ENCODE measurements at regions of chr11 and their contacts with region 1.

Region 1: DNA sequence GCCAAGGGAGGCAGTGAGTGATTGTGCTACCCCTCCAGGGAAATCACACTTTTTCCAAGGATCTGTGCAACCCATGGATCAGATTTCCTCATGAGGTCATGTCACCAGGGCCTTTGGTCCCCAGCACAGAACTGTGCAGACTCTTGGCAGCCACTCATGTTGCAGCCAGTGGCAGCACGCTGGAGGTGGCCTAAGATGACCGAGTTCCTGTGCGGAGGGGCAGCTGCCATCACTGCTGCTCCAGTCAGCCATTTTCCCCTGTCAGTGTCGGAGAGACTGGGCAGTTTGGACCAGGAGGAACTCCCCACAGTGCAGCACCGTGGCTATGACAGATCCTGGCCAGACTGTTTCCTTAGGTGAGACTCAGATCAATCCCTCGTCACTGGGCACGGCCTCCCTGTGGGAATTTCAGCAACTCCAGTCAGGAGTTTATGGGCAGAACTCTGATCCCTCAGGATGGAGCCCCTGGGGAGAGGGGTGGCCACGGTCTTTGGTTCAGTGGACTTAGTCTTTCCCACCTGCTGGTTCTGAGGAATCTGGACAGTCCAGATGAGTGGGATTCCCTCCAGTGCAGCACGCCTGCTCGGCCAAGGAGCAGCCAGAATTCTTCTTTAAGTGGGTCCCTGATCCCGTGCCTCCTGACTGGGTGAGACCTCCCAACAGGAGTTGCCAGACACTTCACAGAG is 194.6 kb upstream of the CARD18 start:
- DNase-seq: no peak
- H3K4me3 ChIP-seq: no peak overlapping the region
- H3K27ac ChIP-seq: no peak overlapping the region
- H3K4me1 ChIP-seq: no peaks in the 10 kb centered on the region
- H3K27me3 ChIP-seq: no peaks in the 10 kb centered on the region
- CTCF ChIP-seq: no peak
- EP300 ChIP-seq: no peak
- POLR2A ChIP-seq: no peak

Region 2: GRCh38 chr11:104009744-104010143 is 1324.4 kb before region 1 on chr11:
- in situ Hi-C with region 1: no loop called
- intact Hi-C with region 1: loop called (anchors 5 kb)
- DNase-seq: no peak
- H3K4me3 ChIP-seq: no peak overlapping the region
- H3K27ac ChIP-seq: no peak overlapping the region
- H3K4me1 ChIP-seq: peaks cover 0 to 7% (median 0%) of the 10 kb centered on the region in 4 donors
- H3K27me3 ChIP-seq: no peaks in the 10 kb centered on the region
- CTCF ChIP-seq: no peak
- EP300 ChIP-seq: no peak
- POLR2A ChIP-seq: no peak

Measured in transverse colon (tissue), 4 donors.